ENCODE measurements at regions of chr17 and their contacts with region 1.

Region 1: DNA sequence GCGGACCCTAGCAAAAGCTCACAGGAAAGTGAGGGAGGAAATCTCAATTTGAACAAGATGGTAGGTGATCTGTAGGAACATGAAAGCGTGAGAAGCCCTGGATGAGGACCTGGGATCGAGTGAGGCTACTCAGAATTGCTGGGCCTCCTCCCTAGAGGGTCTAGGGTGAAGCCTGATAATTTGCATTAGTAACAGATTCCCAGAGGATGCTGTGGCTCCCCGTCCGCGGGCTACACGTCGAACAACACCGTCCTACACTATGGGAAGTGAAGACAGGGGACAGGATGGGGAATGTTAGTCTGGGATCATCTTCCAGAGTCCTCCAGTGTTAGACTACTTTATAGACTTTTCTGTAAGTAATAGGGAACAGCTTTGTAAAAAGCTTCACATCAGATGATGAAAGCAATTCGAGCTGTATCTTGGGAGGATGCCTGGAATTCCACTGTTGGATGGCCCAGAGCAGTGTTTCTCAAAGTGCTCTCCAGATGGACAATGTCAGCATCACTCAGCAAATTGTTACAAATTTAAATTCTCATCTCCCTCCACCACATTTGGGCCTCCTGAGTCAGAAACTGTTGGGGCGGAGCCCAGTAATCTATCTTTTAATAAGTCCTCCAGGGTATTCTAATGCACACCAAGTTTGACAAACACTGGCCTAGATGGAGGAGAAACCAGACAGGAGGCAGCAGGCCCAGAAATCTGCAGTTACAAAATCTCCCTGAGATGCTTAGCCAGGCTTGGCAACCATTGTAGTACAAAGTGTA is 6.5 kb downstream of the FNDC8 start:
- DNase-seq: peak; percentile 38
- H3K4me3 ChIP-seq: no peak overlapping the region
- CTCF ChIP-seq: no peak

Region 2: GRCh38 chr17:35141681-35142466 is 13.9 kb after region 1 on chr17 and contains the start of gene NLE1:
- CTCF ChIA-PET with region 1: interaction called, 24 read pairs
- POLR2A ChIA-PET with region 1: no interaction called
- DNase-seq: no peak
- H3K4me3 ChIP-seq: peak within 1 kb of the TSS; percentile 98
- CTCF ChIP-seq: peak; percentile 99